Heart right ventricle (tissue), 16 donors: ENCODE measurements at regions of chr5 and their contacts with region 1.

Region 1: GRCh38 chr5:14223372-14223771 is 80.2 kb downstream of the TRIO start:
- DNase-seq: no peak
- ATAC-seq: peak in 6 of 8 donors; percentile 9 to 66 (median 42)
- H3K4me3 ChIP-seq: no peak overlapping the region
- H3K27ac ChIP-seq: peak overlapping the region in 6 of 10 donors; percentile 17 to 45 (median 28)
- H3K4me1 ChIP-seq: peaks cover 4 to 93% (median 74%) of the 10 kb centered on the region in 9 donors
- H3K27me3 ChIP-seq: no peaks in the 10 kb centered on the region
- CTCF ChIP-seq: no peak

Region 2: GRCh38 chr5:14264604-14265316 is 41.4 kb after region 1 on chr5:
- intact Hi-C with region 1: loop called in 1 of 10 experiments (anchors 5 kb)
- DNase-seq: peak; percentile 88 to 92
- ATAC-seq: peak; percentile 85 to 97 (median 94)
- H3K4me3 ChIP-seq: peak overlapping the region in 7 of 10 donors; percentile 24 to 47 (median 30)
- H3K27ac ChIP-seq: peak overlapping the region in 3 of 10 donors; percentile 1 to 25 (median 10)
- H3K4me1 ChIP-seq: peaks cover 14 to 82% (median 60%) of the 10 kb centered on the region in 9 donors
- H3K27me3 ChIP-seq: no peaks in the 10 kb centered on the region
- CTCF ChIP-seq: no peak